PC-9 (cell line): ENCODE measurements at regions of chr9 and their contacts with region 1.

Region 1: GRCh38 chr9:125143375-125144090 is at the start of gene SCAI:
- DNase-seq: peak; percentile 96 to 100
- H3K4me3 ChIP-seq: peak within 1 kb of the TSS; percentile 57
- H3K27ac ChIP-seq: no peak within 1 kb of the TSS
- H3K4me1 ChIP-seq: peaks cover 5% of the 10 kb centered on the region; the same call in 1 of the 2 replicates
- H3K27me3 ChIP-seq: no peaks in the 10 kb centered on the region
- CTCF ChIP-seq: peak; percentile 98
- total RNA-seq, gene SCAI: 16.0 and 20.2 TPM in 2 replicates

Region 2: DNA sequence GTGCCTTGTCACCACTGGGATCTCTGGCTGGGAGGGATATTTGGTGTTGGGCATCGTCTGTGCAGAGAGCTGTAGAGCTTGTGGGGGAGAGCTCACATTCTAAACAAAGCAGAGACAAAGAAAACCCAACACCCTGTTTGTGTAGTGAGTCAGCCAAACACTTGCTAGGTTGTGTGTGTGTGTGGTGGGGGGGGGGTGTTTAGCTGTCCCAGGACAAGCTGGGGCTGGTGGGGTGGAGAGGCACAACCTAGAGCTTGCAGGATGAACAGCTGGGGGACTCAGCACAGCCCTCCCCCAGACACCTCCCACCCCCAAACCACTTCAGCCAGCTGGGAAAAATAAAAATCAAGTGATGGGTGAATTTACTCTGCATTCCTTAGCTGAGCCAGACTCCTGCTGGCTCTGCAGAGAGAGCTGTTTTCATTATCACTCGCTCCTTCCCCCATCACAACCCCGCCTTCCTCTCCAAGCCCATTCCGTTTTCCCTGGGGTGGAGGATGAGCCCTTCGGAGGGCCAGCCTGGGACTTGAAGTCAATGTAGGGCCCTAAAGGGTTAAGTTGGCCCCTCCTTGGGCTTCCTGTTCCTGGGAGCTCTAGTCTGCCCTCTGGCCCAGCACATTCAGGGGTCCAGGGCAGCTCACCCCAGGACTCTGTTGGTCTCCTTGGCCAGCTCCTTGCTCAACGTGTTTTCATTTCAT is 364.0 kb before region 1 on chr9:
- CTCF ChIA-PET with region 1: no interaction called
- POLR2A ChIA-PET with region 1: interaction called, 24 read pairs
- intact Hi-C with region 1: no loop called
- DNase-seq: peak; percentile 77 to 90
- H3K4me3 ChIP-seq: no peak overlapping the region
- H3K27ac ChIP-seq: no peak overlapping the region
- H3K4me1 ChIP-seq: peaks cover 18% of the 10 kb centered on the region
- H3K27me3 ChIP-seq: 0 out of 2 replicates have a peak, but pooled peaks cover 7% of the 10 kb centered on the region
- CTCF ChIP-seq: no peak

Region 3: DNA sequence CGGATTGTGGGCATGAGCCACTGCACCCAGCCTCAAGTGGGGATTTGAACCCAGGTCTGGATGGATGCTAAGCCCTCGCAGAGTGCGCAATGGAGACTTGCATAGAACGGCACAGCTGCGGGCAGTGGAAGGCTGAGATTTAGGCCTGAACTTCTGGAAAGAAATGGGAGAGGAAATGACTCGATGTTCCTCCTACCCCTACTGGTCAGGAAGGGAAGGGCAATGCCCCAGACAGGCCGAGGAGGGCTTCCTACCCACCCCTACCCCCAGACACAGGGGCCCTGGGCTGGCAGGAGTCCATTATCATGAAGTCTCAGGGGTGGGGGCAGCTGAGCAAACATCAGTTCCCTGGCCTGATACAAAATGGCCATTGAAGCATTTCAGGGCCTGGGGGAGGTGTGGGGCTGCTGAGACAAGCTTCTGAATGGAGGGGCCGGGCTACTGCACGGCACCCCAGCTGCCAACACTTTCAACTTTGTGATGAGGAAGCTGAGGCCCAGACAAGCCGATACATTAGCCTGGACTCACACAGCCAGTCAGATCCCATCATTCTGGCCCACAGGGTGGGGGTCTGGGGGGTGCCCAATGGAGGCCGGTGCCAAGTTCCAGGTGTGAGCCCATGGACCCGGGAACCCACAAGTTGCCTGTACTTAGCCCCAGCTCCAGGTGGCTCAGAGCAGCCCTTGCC is 303.8 kb before region 1 on chr9:
- CTCF ChIA-PET with region 1: no interaction called
- POLR2A ChIA-PET with region 1: interaction called, 28 read pairs
- intact Hi-C with region 1: no loop called
- DNase-seq: no peak
- H3K4me3 ChIP-seq: no peak overlapping the region
- H3K27ac ChIP-seq: no peak overlapping the region
- H3K4me1 ChIP-seq: peaks cover 19% of the 10 kb centered on the region
- H3K27me3 ChIP-seq: no peaks in the 10 kb centered on the region
- CTCF ChIP-seq: peak; percentile 64

Region 4: DNA sequence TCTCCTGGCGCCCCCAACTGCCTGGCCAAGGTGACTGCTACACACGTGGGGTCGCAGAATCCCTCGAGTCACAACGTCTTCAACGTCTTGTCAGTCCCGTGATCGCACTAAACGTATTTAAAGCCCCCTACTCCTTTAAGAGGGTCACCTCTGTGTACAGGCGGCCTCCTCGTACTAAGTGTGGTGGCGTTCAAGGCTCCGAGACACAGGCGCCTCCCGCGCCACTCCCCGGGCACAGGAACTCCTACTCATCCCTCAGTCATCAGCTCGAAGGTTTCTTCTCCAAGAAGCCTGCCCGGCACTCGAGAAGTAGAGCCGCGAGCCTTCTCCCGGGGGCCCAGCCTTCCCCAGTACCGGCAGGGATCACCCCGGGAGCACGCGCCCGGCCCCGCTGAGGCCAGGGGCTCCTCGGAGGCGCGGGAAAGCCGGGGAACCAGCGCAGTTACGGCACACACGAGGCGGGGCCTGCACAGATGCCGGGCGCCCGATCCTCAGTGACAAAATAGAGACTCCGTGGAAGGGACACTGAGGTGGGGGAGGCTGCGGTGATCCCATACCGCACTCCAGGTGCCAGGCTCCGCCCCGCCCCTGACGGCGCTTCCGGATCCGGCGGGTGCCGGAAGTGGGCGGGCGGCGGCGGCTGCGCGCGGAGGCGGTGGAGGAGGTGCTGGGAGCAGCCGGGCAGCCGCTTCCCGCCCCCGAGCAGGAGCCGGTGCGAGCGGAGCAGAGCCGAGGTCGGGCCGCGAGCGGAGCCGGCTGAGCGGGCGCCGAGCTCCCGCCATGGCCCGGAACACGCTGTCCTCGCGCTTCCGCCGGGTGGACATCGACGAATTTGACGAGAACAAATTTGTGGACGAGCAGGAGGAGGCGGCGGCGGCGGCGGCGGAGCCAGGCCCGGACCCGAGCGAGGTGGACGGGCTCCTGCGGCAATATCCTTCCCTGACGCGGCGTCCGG is 274.7 kb before region 1 on chr9:
- CTCF ChIA-PET with region 1: no interaction called
- POLR2A ChIA-PET with region 1: no interaction called
- intact Hi-C with region 1: no loop called
- DNase-seq: peak; percentile 67 to 93
- H3K4me3 ChIP-seq: peak overlapping the region; percentile 100
- H3K27ac ChIP-seq: peak overlapping the region; percentile 97
- H3K4me1 ChIP-seq: peaks cover 26% of the 10 kb centered on the region; the same call in 1 of the 2 replicates
- H3K27me3 ChIP-seq: no peaks in the 10 kb centered on the region
- CTCF ChIP-seq: peak; percentile 54; the same call in 1 of the 2 replicates

Region 5: DNA sequence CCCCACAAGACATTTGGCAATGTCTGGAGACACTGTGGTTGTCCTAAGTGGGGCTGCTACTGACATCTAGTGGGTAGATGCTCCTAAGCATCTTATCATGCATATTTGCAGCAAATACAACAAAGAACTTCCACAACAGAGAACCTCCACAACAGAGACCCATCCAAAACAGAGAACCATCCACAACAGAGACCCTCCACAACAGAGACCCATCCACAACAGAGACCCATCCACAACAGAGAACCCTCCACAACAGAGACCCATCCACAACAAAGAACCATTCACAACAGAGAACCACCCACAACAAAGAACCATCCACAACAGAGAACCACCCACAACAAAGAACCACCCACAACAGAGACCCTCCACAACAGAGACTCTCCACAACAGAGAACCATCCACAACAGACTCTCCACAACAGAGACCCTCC is 248.8 kb before region 1 on chr9:
- CTCF ChIA-PET with region 1: no interaction called
- POLR2A ChIA-PET with region 1: no interaction called
- intact Hi-C with region 1: loop called (anchors 5 kb)
- DNase-seq: peak in 1 of 2 experiments; percentile 21
- H3K4me3 ChIP-seq: no peak overlapping the region
- H3K27ac ChIP-seq: no peak overlapping the region
- H3K4me1 ChIP-seq: no peaks in the 10 kb centered on the region
- H3K27me3 ChIP-seq: no peaks in the 10 kb centered on the region
- CTCF ChIP-seq: peak; percentile 54; the same call in 1 of the 2 replicates

Region 6: DNA sequence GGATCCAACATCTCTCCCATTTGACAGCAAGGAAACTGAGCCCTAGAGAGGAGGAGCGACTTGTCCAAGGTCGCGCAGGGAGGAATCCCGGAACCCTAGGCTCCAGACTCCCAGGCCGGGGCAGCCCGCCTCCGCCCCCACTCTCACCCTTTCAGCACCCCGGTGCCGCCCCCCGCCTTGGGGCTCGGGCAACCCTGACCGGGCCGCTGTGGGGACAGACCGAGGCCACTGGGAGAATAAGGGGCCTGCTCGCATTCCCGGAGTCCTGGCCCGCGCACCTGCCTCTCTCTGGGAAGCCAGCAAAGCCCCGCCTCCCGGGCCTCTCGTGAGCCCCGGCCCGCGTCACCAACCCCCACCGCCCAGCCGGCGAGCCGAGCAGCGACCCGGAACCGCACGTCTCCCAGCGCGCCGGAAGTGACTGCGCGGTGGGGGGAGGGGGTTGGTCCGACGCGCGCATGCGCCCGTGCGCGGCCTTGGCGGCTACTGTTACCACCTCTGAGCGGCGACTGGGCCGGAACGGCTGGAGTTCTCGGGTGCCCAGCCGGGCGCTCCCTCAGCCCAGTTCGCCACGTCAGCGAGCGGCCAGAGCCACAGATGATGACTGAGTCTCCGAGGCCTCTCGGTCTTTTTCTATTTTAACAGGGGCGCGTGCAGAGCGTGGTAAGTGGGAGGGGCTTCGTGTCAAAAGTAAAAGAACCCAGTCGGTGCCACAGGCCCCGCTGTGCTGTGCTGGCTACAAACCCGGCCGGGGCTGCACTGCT is 202.7 kb before region 1 on chr9 and contains the start of gene GOLGA1:
- CTCF ChIA-PET with region 1: no interaction called
- POLR2A ChIA-PET with region 1: interaction called, 13 read pairs
- intact Hi-C with region 1: loop called (anchors 1 kb)
- DNase-seq: peak; percentile 82 to 98
- H3K4me3 ChIP-seq: peak within 1 kb of the TSS; percentile 71
- H3K27ac ChIP-seq: peak within 1 kb of the TSS; percentile 83
- H3K4me1 ChIP-seq: peaks cover 19% of the 10 kb centered on the region
- H3K27me3 ChIP-seq: no peaks in the 10 kb centered on the region
- CTCF ChIP-seq: no peak
- total RNA-seq, gene GOLGA1: 23.0 and 26.2 TPM in 2 replicates

Region 7: DNA sequence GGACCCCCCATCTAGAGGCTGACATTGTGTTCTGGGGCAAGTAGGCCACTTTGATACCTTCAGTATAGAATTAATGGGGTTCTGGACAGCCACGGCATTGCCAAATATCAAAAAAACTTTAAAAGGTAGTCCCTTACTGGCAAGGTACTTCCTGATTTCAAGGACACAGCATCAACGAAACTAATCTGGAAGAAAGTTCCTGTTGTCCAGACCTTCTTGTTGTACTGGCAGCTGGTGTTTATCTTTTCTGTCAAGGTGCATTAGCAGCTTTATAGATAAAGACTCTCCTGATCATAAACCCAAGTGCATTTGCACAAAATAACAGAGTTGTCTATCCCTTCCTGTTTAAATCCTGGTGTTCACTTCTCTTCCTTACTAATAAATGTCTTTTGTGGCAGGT is 178.9 kb before region 1 on chr9:
- CTCF ChIA-PET with region 1: no interaction called
- POLR2A ChIA-PET with region 1: no interaction called
- intact Hi-C with region 1: no loop called
- DNase-seq: no peak
- H3K4me3 ChIP-seq: no peak overlapping the region
- H3K27ac ChIP-seq: no peak overlapping the region
- H3K4me1 ChIP-seq: no peaks in the 10 kb centered on the region
- H3K27me3 ChIP-seq: no peaks in the 10 kb centered on the region
- CTCF ChIP-seq: no peak

Region 8: DNA sequence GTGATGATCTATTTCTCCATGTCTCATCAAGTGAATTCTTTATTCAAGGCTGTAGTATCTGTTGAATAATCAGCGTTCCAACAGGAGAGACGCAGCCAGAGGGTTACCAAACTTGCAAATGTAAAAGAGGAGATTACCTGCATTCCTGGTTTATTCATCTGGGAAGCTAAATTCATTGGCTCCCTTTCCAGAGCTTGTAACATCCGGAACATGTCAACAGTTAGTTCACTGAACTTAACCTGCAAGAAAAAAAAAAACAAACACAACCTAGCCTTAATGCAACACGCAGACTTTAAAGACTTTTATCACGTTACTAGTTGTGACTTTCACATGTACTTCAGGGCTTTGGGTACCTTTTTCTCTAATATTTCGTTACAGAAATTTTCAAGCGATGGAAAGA is 140.2 kb before region 1 on chr9:
- CTCF ChIA-PET with region 1: interaction called, 12 read pairs
- POLR2A ChIA-PET with region 1: no interaction called
- intact Hi-C with region 1: no loop called
- DNase-seq: no peak
- H3K4me3 ChIP-seq: no peak overlapping the region
- H3K27ac ChIP-seq: no peak overlapping the region
- H3K4me1 ChIP-seq: no peaks in the 10 kb centered on the region
- H3K27me3 ChIP-seq: no peaks in the 10 kb centered on the region
- CTCF ChIP-seq: no peak

Region 9: GRCh38 chr9:125241000-125241862 is 97.7 kb after region 1 on chr9 and contains the start of gene HSPA5:
- CTCF ChIA-PET with region 1: interaction called, 3 read pairs
- POLR2A ChIA-PET with region 1: interaction called, 3 read pairs
- intact Hi-C with region 1: loop called (anchors 1 kb)
- DNase-seq: peak; percentile 97 to 99
- H3K4me3 ChIP-seq: peak within 1 kb of the TSS; percentile 92
- H3K27ac ChIP-seq: peak within 1 kb of the TSS; percentile 95
- H3K4me1 ChIP-seq: peaks cover 52% of the 10 kb centered on the region
- H3K27me3 ChIP-seq: no peaks in the 10 kb centered on the region
- CTCF ChIP-seq: no peak
- total RNA-seq, gene HSPA5: 185 and 235 TPM in 2 replicates